Panc1 (cell line): ENCODE measurements at regions of chr19 and their contacts with region 1.

Region 1: GRCh38 chr19:35716801-35717666 is 769 bp upstream of the KMT2B start:
- DNase-seq: peak; percentile 77
- ATAC-seq: peak; percentile 92
- H3K4me3 ChIP-seq: peak overlapping the region; percentile 73 to 87
- H3K27ac ChIP-seq: peak overlapping the region; percentile 89
- H3K4me1 ChIP-seq: peaks cover 16% of the 10 kb centered on the region
- H3K27me3 ChIP-seq: no peaks in the 10 kb centered on the region
- CTCF ChIP-seq: peak; percentile 100

Region 2: GRCh38 chr19:35154525-35155406 is 562.3 kb before region 1 on chr19 and contains the start of gene FXYD5:
- CTCF ChIA-PET with region 1: no interaction called
- POLR2A ChIA-PET with region 1: no interaction called
- in situ Hi-C with region 1: no loop called
- intact Hi-C with region 1: no loop called
- DNase-seq: no peak
- ATAC-seq: peak; percentile 87
- H3K4me3 ChIP-seq: peak within 1 kb of the TSS; percentile 71 to 83
- H3K27ac ChIP-seq: peak within 1 kb of the TSS; percentile 72
- H3K4me1 ChIP-seq: peaks cover 10% of the 10 kb centered on the region
- H3K27me3 ChIP-seq: no peaks in the 10 kb centered on the region
- CTCF ChIP-seq: no peak
- total RNA-seq, gene FXYD5: 33.6 TPM

Region 3: GRCh38 chr19:35557539-35558399 is 159.3 kb before region 1 on chr19:
- CTCF ChIA-PET with region 1: no interaction called
- POLR2A ChIA-PET with region 1: no interaction called
- in situ Hi-C with region 1: no loop called
- intact Hi-C with region 1: loop called (anchors 10 kb)
- DNase-seq: no peak
- ATAC-seq: peak; percentile 84
- H3K4me3 ChIP-seq: peak overlapping the region; percentile 31 to 70
- H3K27ac ChIP-seq: no peak overlapping the region
- H3K4me1 ChIP-seq: peaks cover 6% of the 10 kb centered on the region; the same call in 1 of the 2 replicates
- H3K27me3 ChIP-seq: peaks cover 6% of the 10 kb centered on the region; the same call in 1 of the 2 replicates
- CTCF ChIP-seq: no peak

Region 4: DNA sequence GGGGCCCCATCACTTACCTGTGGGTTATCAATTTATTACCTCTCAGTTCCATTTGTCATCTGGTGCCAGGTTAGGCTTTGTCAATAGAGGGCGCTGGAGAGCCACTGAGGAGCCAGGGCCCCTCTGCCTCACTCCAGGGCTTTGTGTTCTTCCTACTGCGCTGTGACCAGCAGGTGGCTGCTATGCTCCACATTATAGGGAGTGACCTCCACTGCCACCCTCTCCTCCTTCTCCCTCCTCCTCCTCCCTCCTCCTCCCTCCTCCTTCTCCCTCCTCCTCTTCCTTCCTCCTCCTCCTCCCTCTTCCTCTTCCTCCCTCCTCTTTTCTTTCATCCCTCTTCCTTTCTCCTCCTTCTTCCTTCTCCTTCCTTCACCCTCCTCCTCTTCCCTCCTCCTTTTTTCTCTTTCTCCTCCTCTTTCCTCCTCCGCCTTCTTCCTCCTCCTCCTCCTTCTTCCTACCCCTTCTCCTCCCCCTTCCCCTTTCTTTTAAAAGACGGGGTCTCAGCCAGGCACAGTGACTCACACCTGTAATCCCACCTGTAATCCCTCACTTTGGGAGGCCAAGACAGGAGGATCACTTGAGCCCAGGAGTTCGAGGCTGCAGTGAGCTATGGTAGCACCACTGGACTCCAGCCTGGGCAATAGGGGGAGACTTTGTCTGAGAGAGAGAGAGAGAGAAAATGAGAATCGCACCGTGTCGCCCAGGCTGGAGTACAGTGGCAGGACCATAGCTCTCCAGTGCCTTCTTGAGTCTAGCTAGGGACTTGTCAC is 23.0 kb before region 1 on chr19:
- CTCF ChIA-PET with region 1: interaction called, 3 read pairs
- POLR2A ChIA-PET with region 1: no interaction called
- in situ Hi-C with region 1: no loop called
- intact Hi-C with region 1: loop called (anchors 2 kb)
- DNase-seq: peak; percentile 85
- ATAC-seq: peak; percentile 100
- H3K4me3 ChIP-seq: no peak overlapping the region
- H3K27ac ChIP-seq: no peak overlapping the region
- H3K4me1 ChIP-seq: no peaks in the 10 kb centered on the region
- H3K27me3 ChIP-seq: no peaks in the 10 kb centered on the region
- CTCF ChIP-seq: peak; percentile 100